ENCODE measurements at regions of chr12 and their contacts with region 1.

Region 1: GRCh38 chr12:98593351-98594049 is at the start of gene SLC25A3:
- DNase-seq: peak; percentile 95
- ATAC-seq: peak; percentile 98
- H3K4me3 ChIP-seq: peak within 1 kb of the TSS; percentile 87
- H3K27ac ChIP-seq: peak within 1 kb of the TSS; percentile 84
- H3K4me1 ChIP-seq: no peaks in the 10 kb centered on the region
- H3K27me3 ChIP-seq: no peaks in the 10 kb centered on the region
- CTCF ChIP-seq: no peak
- EP300 ChIP-seq: 0 out of 4 replicates have a peak, but pooled peaks of 1 of the 2 experiments have one; percentile 23
- POLR2A ChIP-seq: peak; percentile 99
- RAD21 ChIP-seq: no peak
- polyA plus RNA-seq, gene SLC25A3: 314 to 677 TPM

Region 2: DNA sequence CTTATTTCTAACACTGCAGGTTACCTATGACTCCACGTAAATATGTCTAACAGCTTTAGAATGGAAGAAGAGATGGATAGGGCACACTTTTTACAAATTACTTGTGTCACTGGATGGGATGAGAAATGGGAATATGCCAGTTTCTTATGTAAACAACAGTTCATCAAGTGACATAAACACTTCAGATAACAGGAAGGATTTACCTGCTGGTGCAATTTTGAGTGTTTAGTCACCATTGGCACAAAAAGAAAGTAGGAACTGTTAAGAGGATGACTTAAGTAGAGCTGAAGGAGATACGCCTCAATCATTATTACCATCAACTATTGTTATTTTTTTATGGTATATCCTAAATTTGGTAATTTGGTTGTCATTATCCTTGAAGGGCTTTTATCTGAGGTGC is 1047.7 kb before region 1 on chr12:
- CTCF ChIA-PET with region 1: no interaction called
- POLR2A ChIA-PET with region 1: no interaction called
- RAD21 ChIA-PET with region 1: no interaction called
- SMC1A ChIA-PET with region 1: no interaction called
- in situ Hi-C with region 1: no loop called
- intact Hi-C with region 1: no loop called
- DNase-seq: no peak
- ATAC-seq: no peak
- H3K4me3 ChIP-seq: no peak overlapping the region
- H3K27ac ChIP-seq: no peak overlapping the region
- H3K4me1 ChIP-seq: no peaks in the 10 kb centered on the region
- H3K27me3 ChIP-seq: no peaks in the 10 kb centered on the region
- CTCF ChIP-seq: no peak
- EP300 ChIP-seq: no peak
- POLR2A ChIP-seq: no peak
- RAD21 ChIP-seq: no peak

Region 3: GRCh38 chr12:98483621-98484503 is 109.6 kb before region 1 on chr12:
- CTCF ChIA-PET with region 1: no interaction called
- POLR2A ChIA-PET with region 1: no interaction called
- RAD21 ChIA-PET with region 1: no interaction called
- SMC1A ChIA-PET with region 1: no interaction called
- in situ Hi-C with region 1: no loop called
- intact Hi-C with region 1: no loop called
- DNase-seq: no peak
- ATAC-seq: no peak
- H3K4me3 ChIP-seq: no peak overlapping the region
- H3K27ac ChIP-seq: no peak overlapping the region
- H3K4me1 ChIP-seq: no peaks in the 10 kb centered on the region
- H3K27me3 ChIP-seq: no peaks in the 10 kb centered on the region; a peak in 1 of 4 replicates
- CTCF ChIP-seq: no peak
- EP300 ChIP-seq: no peak
- POLR2A ChIP-seq: no peak
- RAD21 ChIP-seq: no peak

Region 4: DNA sequence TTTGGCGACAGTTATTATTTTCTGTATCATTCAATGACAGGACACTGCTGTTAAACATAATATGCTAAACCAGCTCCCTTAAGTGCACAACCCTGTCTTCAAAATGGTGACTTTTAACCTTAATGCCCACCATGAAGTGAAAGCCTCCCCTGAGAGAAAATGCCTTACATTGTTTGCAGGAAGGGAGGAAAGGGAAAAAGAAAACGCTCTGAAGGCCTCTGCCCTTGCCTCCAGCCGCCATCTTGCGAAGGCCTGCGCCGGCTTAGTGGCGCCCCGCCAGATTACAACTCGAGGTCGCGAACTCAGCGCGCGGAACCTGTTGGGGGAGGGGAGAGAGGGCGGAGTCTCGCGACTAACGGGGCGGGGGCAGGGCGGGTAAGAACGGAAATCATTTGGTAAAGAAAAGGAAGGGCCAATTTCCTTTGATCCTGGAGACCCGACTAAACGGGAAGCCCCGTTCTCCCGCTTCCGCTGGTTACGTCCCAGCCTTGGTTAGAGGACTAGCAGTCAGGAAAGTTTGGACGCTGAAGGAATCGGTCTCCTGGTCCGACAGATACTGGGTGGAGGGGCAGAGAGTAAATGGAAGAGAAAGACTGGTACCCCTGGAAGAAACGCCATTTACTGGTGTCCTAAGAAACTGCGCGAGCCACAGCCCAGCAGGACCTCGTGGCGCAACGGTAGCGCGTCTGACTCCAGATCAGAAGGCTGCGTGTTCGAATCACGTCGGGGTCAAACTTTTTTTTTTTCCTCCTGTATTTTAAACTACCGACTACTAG is 89.7 kb before region 1 on chr12:
- CTCF ChIA-PET with region 1: no interaction called
- POLR2A ChIA-PET with region 1: interaction called, 3 read pairs
- RAD21 ChIA-PET with region 1: no interaction called
- SMC1A ChIA-PET with region 1: no interaction called
- in situ Hi-C with region 1: no loop called
- intact Hi-C with region 1: loop called (anchors 1 kb)
- DNase-seq: peak; percentile 91
- ATAC-seq: peak; percentile 88
- H3K4me3 ChIP-seq: peak overlapping the region; percentile 75; the same call in 1 of the 2 replicates
- H3K27ac ChIP-seq: peak overlapping the region; percentile 99
- H3K4me1 ChIP-seq: peaks cover 3% of the 10 kb centered on the region; the same call in 1 of the 2 replicates
- H3K27me3 ChIP-seq: no peaks in the 10 kb centered on the region
- CTCF ChIP-seq: no peak
- EP300 ChIP-seq: no peak; a peak in 1 of 4 replicates
- POLR2A ChIP-seq: peak; percentile 89
- RAD21 ChIP-seq: 0 out of 2 replicates have a peak, but pooled peaks have one; percentile 13

Region 5: DNA sequence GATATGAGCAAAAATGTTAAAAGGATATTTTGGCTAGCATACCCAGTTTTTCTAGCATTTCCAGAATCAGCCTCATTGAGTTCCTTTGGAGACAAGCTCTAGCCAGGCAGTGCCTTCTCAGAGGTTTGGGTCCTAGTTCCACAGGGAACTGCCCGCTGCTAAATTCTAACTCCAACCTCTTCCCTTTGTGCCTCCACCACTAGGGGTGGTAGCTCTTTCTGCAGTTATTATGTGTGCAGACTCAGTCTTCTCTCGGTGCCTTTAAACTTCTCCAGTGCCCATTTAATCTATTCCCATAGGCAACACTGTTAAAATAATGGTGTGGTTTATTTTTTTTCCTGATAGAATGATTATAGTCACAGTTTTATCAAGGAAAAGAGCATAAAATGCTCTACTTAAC is 21.5 kb before region 1 on chr12:
- CTCF ChIA-PET with region 1: interaction called, 48 read pairs
- POLR2A ChIA-PET with region 1: interaction called, 4 read pairs
- RAD21 ChIA-PET with region 1: interaction called, 13 read pairs
- SMC1A ChIA-PET with region 1: interaction called, 21 read pairs
- in situ Hi-C with region 1: no loop called
- intact Hi-C with region 1: no loop called
- DNase-seq: no peak
- ATAC-seq: peak; percentile 53; the same call in 2 of the 3 replicates
- H3K4me3 ChIP-seq: no peak overlapping the region
- H3K27ac ChIP-seq: no peak overlapping the region
- H3K4me1 ChIP-seq: no peaks in the 10 kb centered on the region
- H3K27me3 ChIP-seq: no peaks in the 10 kb centered on the region
- CTCF ChIP-seq: peak; percentile 4 to 34 (median 31); a peak in 2 of 6 replicates
- EP300 ChIP-seq: no peak
- POLR2A ChIP-seq: no peak
- RAD21 ChIP-seq: no peak

Region 6: DNA sequence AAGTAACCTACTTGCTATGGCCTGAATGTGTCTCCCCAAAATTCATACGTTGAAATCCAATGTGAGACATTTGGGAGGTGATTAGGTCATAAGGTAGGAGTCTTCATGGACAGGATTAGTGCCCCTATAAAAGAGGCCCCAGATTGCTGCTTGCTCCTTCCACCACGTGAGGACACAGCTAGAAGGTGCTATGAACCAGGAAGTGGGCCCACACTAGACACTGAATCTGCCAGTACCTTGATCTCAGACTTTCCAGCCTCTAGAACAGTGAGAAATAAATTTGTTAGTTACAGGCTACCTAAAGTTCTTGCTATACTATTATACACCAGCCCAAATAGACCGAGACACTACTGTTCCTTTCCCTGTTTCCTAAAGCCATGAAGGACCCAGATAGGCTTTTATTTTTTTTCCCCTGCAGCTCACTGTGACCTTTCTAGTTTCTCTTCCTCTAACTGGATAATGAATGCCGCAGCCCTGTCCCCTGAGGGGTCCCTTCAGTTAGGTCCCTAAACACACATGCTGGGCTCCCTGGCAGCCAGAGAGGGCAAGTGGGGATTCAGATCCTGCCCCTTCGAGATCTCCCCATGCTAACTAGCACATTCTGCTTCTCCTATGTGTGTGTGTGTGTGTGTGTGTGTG is 19.3 kb after region 1 on chr12:
- CTCF ChIA-PET with region 1: interaction called, 7 read pairs
- POLR2A ChIA-PET with region 1: interaction called, 8 read pairs
- RAD21 ChIA-PET with region 1: interaction called, 6 read pairs
- SMC1A ChIA-PET with region 1: interaction called, 25 read pairs
- in situ Hi-C with region 1: no loop called
- intact Hi-C with region 1: no loop called
- DNase-seq: peak; percentile 38
- ATAC-seq: peak; percentile 94
- H3K4me3 ChIP-seq: no peak overlapping the region
- H3K27ac ChIP-seq: peak overlapping the region; percentile 49
- H3K4me1 ChIP-seq: peaks cover 7% of the 10 kb centered on the region; the same call in 1 of the 2 replicates
- H3K27me3 ChIP-seq: no peaks in the 10 kb centered on the region
- CTCF ChIP-seq: 0 out of 6 replicates have a peak, but pooled peaks of 1 of the 3 experiments have one; percentile 8
- EP300 ChIP-seq: no peak
- POLR2A ChIP-seq: no peak
- RAD21 ChIP-seq: no peak

Region 7: GRCh38 chr12:98635657-98636323 is 42.3 kb after region 1 on chr12:
- CTCF ChIA-PET with region 1: interaction called, 8 read pairs
- POLR2A ChIA-PET with region 1: interaction called, 49 read pairs
- RAD21 ChIA-PET with region 1: interaction called, 6 read pairs
- SMC1A ChIA-PET with region 1: interaction called, 54 read pairs
- in situ Hi-C with region 1: no loop called
- intact Hi-C with region 1: no loop called
- DNase-seq: peak; percentile 44
- ATAC-seq: peak; percentile 92
- H3K4me3 ChIP-seq: peak overlapping the region; percentile 16; the same call in 1 of the 2 replicates
- H3K27ac ChIP-seq: peak overlapping the region; percentile 37; the same call in 1 of the 2 replicates
- H3K4me1 ChIP-seq: peaks cover 20% of the 10 kb centered on the region
- H3K27me3 ChIP-seq: no peaks in the 10 kb centered on the region
- CTCF ChIP-seq: no peak
- EP300 ChIP-seq: peak in 1 of 2 experiments; percentile 40; a peak in 1 of 4 replicates
- POLR2A ChIP-seq: no peak
- RAD21 ChIP-seq: no peak

Region 8: GRCh38 chr12:98653866-98654493 is 60.5 kb after region 1 on chr12:
- CTCF ChIA-PET with region 1: interaction called, 8 read pairs
- POLR2A ChIA-PET with region 1: interaction called, 41 read pairs
- RAD21 ChIA-PET with region 1: interaction called, 27 read pairs
- SMC1A ChIA-PET with region 1: interaction called, 42 read pairs
- in situ Hi-C with region 1: no loop called
- intact Hi-C with region 1: no loop called
- DNase-seq: no peak
- ATAC-seq: peak; percentile 68
- H3K4me3 ChIP-seq: no peak overlapping the region
- H3K27ac ChIP-seq: no peak overlapping the region
- H3K4me1 ChIP-seq: no peaks in the 10 kb centered on the region; the same call in 1 of the 2 replicates
- H3K27me3 ChIP-seq: no peaks in the 10 kb centered on the region
- CTCF ChIP-seq: peak; percentile 52 to 77 (median 54)
- EP300 ChIP-seq: no peak
- POLR2A ChIP-seq: no peak
- RAD21 ChIP-seq: peak; percentile 87

Region 9: GRCh38 chr12:99099786-99100185 is 506.3 kb after region 1 on chr12:
- CTCF ChIA-PET with region 1: no interaction called
- POLR2A ChIA-PET with region 1: no interaction called
- RAD21 ChIA-PET with region 1: no interaction called
- SMC1A ChIA-PET with region 1: no interaction called
- in situ Hi-C with region 1: no loop called
- intact Hi-C with region 1: no loop called
- DNase-seq: no peak
- ATAC-seq: no peak
- H3K4me3 ChIP-seq: no peak overlapping the region
- H3K27ac ChIP-seq: no peak overlapping the region
- H3K4me1 ChIP-seq: no peaks in the 10 kb centered on the region
- H3K27me3 ChIP-seq: no peaks in the 10 kb centered on the region
- CTCF ChIP-seq: no peak
- EP300 ChIP-seq: no peak
- POLR2A ChIP-seq: no peak
- RAD21 ChIP-seq: no peak

Measured in GM12878 (cell line).